ENCODE measurements at regions of chr1 and their contacts with region 1.

Region 1: DNA sequence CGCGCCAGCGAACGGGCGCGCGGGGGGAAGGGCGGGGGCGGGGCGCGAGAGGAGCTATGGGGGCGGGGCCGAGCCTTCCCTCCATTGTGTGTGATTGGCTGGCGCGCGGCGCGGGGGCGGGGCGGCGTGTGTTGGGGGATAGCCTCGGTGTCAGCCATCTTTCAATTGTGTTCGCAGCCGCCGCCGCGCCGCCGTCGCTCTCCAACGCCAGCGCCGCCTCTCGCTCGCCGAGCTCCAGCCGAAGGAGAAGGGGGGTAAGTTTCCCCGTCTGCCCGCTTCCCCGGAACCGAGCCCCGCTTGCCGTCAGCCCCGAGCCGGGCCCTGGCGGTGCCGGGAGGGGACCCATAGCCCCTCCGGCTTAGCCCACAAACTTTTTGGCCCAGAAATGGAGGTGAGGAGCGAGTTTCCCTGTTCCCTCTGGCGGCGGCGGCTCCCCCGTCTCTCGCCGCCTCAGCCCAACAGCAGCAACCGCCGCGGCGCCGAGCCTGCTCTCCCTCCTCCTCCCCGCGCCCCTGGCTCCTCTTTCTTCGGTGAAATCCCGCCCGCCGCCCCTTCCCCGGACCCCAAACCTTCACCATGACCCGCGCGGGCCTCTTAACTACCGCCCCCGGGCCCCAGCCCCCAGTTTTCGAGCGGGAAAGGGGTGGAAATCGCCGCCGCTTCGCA is at the start of gene H3-3A:
- DNase-seq: peak; percentile 97 to 98
- H3K4me3 ChIP-seq: peak within 1 kb of the TSS; percentile 93
- H3K4me3 Mint-ChIP-seq: peak within 1 kb of the TSS; percentile 97
- H3K27ac Mint-ChIP-seq: peak within 1 kb of the TSS; percentile 99
- H3K4me1 ChIP-seq: peaks cover 9% of the 10 kb centered on the region
- H3K4me1 Mint-ChIP-seq: peaks cover 24% of the 10 kb centered on the region
- H3K27me3 ChIP-seq: no peaks in the 10 kb centered on the region
- H3K27me3 Mint-ChIP-seq: no peaks in the 10 kb centered on the region
- CTCF ChIP-seq: no peak
- total RNA-seq, gene H3-3A: 512 and 554 TPM in 2 replicates

Region 2: DNA sequence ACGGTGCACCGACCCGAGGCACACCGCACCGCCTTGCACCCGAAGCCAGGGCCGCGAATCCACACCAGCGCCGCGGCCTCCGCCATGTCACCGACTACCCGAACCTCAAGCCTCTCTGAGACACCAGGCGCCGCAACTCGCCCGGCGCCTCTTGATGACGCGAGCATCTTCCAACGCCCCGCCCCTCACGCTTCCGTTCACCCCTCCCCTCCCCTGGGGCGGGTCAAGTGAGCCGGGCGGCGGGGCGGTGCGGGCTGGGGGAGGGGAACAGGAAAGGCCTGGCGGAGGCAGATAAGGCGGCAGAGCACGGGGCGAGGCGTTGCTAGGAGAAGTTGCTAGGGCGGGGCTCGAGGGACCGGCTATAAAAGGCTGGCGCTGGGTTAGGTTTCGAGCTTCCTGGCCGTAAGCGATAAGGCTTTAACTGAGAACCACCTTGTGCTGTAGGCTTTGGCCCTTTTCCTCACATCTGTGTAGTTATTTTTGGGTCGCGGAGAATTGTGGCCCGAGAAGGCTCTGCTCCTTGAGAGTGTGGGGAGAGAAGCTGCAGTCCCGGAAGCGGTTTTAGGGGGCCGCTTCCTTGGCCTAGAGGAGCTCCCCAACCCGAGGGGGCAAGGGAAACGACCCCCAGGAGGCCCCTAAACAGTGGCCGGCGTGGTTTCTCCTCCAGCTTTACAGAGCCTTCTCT is 63.3 kb before region 1 on chr1 and contains the start of gene SDE2:
- CTCF ChIA-PET with region 1: interaction called, 4 read pairs
- POLR2A ChIA-PET with region 1: interaction called, 34 read pairs
- intact Hi-C with region 1: loop called (anchors 1 kb)
- DNase-seq: peak; percentile 99
- H3K4me3 ChIP-seq: peak within 1 kb of the TSS; percentile 58
- H3K4me3 Mint-ChIP-seq: peak within 1 kb of the TSS; percentile 96
- H3K27ac Mint-ChIP-seq: peak within 1 kb of the TSS; percentile 99
- H3K4me1 ChIP-seq: peaks cover 17% of the 10 kb centered on the region
- H3K4me1 Mint-ChIP-seq: peaks cover 13% of the 10 kb centered on the region
- H3K27me3 ChIP-seq: no peaks in the 10 kb centered on the region
- H3K27me3 Mint-ChIP-seq: no peaks in the 10 kb centered on the region
- CTCF ChIP-seq: no peak
- total RNA-seq, gene SDE2: 16.6 and 18.6 TPM in 2 replicates

Region 3: DNA sequence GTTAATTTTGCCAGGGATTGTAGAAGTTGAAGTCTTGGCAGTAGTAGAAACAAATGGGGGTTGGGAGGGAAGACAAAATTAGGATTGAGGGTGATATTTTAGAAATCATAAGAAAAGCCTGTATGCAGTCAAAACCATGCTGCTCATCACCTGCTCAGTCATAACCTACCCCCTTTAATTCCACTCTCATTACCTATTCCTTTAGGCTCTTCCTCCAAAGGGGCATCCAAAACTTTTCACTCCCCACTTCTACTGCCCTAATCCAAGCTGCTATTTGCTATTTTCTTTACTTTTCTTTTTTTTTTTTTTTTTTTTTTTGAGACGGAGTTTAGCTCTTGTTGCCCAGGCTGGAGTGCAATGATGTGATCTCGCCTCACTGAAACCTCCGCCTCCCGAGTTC is 11.4 kb after region 1 on chr1:
- CTCF ChIA-PET with region 1: interaction called, 18 read pairs
- POLR2A ChIA-PET with region 1: interaction called, 6 read pairs
- intact Hi-C with region 1: no loop called
- DNase-seq: no peak
- H3K4me3 ChIP-seq: no peak overlapping the region
- H3K4me3 Mint-ChIP-seq: no peak overlapping the region
- H3K27ac Mint-ChIP-seq: no peak overlapping the region
- H3K4me1 ChIP-seq: no peaks in the 10 kb centered on the region
- H3K4me1 Mint-ChIP-seq: no peaks in the 10 kb centered on the region
- H3K27me3 ChIP-seq: no peaks in the 10 kb centered on the region
- H3K27me3 Mint-ChIP-seq: no peaks in the 10 kb centered on the region
- CTCF ChIP-seq: no peak

Region 4: DNA sequence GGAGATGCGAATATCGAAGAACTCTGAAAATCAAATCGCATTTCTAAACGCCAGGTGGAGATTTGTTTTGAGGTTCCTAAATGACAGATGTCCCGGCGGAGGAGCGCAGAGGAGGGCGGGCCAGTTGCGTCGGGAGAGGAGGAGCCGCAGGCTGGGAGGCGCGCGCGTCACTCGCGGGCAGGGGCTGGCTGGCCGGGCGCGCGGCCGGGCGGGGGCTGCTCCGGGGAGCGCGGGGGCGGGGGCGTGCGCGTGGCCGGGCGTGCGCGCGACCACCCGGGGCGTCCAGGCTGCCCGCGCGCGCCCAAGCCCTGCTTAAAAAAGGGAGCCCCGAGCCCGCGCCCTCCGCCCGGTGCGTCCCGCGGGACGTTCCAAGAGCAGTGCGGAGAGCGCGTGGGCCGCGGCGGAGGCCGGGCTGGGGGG is 47.1 kb after region 1 on chr1:
- CTCF ChIA-PET with region 1: interaction called, 19 read pairs
- POLR2A ChIA-PET with region 1: interaction called, 4 read pairs
- intact Hi-C with region 1: no loop called
- DNase-seq: peak; percentile 90 to 92
- H3K4me3 ChIP-seq: peak overlapping the region; percentile 76
- H3K4me3 Mint-ChIP-seq: peak overlapping the region; percentile 83
- H3K27ac Mint-ChIP-seq: peak overlapping the region; percentile 85
- H3K4me1 ChIP-seq: peaks cover 15% of the 10 kb centered on the region; the same call in 1 of the 2 replicates
- H3K4me1 Mint-ChIP-seq: peaks cover 27% of the 10 kb centered on the region
- H3K27me3 ChIP-seq: no peaks in the 10 kb centered on the region
- H3K27me3 Mint-ChIP-seq: no peaks in the 10 kb centered on the region
- CTCF ChIP-seq: no peak

Region 5: GRCh38 chr1:226128487-226129075 is 65.9 kb after region 1 on chr1:
- CTCF ChIA-PET with region 1: interaction called, 9 read pairs
- POLR2A ChIA-PET with region 1: interaction called, 11 read pairs
- intact Hi-C with region 1: no loop called
- DNase-seq: peak; percentile 66 to 78
- H3K4me3 ChIP-seq: no peak overlapping the region
- H3K4me3 Mint-ChIP-seq: peak overlapping the region; percentile 66
- H3K27ac Mint-ChIP-seq: peak overlapping the region; percentile 95
- H3K4me1 ChIP-seq: peaks cover 25% of the 10 kb centered on the region
- H3K4me1 Mint-ChIP-seq: peaks cover 31% of the 10 kb centered on the region
- H3K27me3 ChIP-seq: no peaks in the 10 kb centered on the region
- H3K27me3 Mint-ChIP-seq: no peaks in the 10 kb centered on the region
- CTCF ChIP-seq: no peak

Region 6: GRCh38 chr1:226293553-226293920 is 230.8 kb after region 1 on chr1:
- CTCF ChIA-PET with region 1: no interaction called
- POLR2A ChIA-PET with region 1: no interaction called
- intact Hi-C with region 1: no loop called
- DNase-seq: no peak
- H3K4me3 ChIP-seq: no peak overlapping the region
- H3K4me3 Mint-ChIP-seq: no peak overlapping the region
- H3K27ac Mint-ChIP-seq: no peak overlapping the region
- H3K4me1 ChIP-seq: no peaks in the 10 kb centered on the region
- H3K4me1 Mint-ChIP-seq: no peaks in the 10 kb centered on the region
- H3K27me3 ChIP-seq: no peaks in the 10 kb centered on the region
- H3K27me3 Mint-ChIP-seq: no peaks in the 10 kb centered on the region
- CTCF ChIP-seq: no peak